ENCODE measurements at regions of chr7 and their contacts with region 1.

Region 1: GRCh38 chr7:16564909-16565426 is 38.3 kb downstream of the LRRC72 start:
- DNase-seq: peak in 4 of 5 donors; percentile 43 to 53 (median 51)
- H3K4me3 ChIP-seq: no peak overlapping the region
- H3K4me3 Mint-ChIP-seq: peak overlapping the region in 2 of 8 donors; percentile 57 to 67
- H3K27ac ChIP-seq: no peak overlapping the region
- H3K27ac Mint-ChIP-seq: peak overlapping the region in 1 of 7 donors; percentile 81
- H3K4me1 ChIP-seq: peaks cover 19% of the 10 kb centered on the region
- H3K4me1 Mint-ChIP-seq: peaks cover 8 to 17% (median 14%) of the 10 kb centered on the region in 4 donors
- H3K27me3 ChIP-seq: no peaks in the 10 kb centered on the region
- H3K27me3 Mint-ChIP-seq: peaks cover 3 to 5% of the 10 kb centered on the region in 2 donors

Region 2: DNA sequence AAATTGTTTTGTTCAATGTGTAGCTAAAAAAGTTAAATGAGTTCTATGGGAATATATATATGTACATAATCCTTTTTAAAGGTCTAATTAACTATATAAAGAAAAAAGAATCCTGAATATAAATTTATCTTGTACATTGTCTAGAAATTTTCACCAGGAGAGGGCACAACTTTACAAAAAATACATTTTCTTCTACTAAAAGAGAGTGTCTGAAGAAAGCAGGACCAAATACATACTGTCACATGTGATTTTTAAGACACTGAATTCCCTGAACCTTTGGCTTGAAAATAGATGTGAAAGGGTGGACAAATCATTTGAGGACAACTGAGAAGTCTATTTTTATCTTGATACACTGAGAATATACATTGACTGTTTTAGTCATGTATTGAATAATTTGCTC is 1866.7 kb before region 1 on chr7:
- CTCF ChIA-PET with region 1: no interaction called
- POLR2A ChIA-PET with region 1: no interaction called
- intact Hi-C with region 1: loop called (anchors 5 kb)
- DNase-seq: no peak
- H3K4me3 ChIP-seq: no peak overlapping the region
- H3K4me3 Mint-ChIP-seq: no peak overlapping the region
- H3K27ac ChIP-seq: no peak overlapping the region
- H3K27ac Mint-ChIP-seq: no peak overlapping the region
- H3K4me1 ChIP-seq: no peaks in the 10 kb centered on the region
- H3K4me1 Mint-ChIP-seq: no peaks in the 10 kb centered on the region
- H3K27me3 ChIP-seq: no peaks in the 10 kb centered on the region
- H3K27me3 Mint-ChIP-seq: peaks cover 0 to 2% of the 10 kb centered on the region in 2 donors

Region 3: GRCh38 chr7:15963206-15963605 is 601.8 kb before region 1 on chr7:
- CTCF ChIA-PET with region 1: no interaction called
- POLR2A ChIA-PET with region 1: no interaction called
- intact Hi-C with region 1: no loop called
- DNase-seq: no peak
- H3K4me3 ChIP-seq: no peak overlapping the region
- H3K4me3 Mint-ChIP-seq: no peak overlapping the region
- H3K27ac ChIP-seq: no peak overlapping the region
- H3K27ac Mint-ChIP-seq: no peak overlapping the region
- H3K4me1 ChIP-seq: no peaks in the 10 kb centered on the region
- H3K4me1 Mint-ChIP-seq: no peaks in the 10 kb centered on the region
- H3K27me3 ChIP-seq: no peaks in the 10 kb centered on the region
- H3K27me3 Mint-ChIP-seq: no peaks in the 10 kb centered on the region

Region 4: GRCh38 chr7:16028103-16028502 is 536.9 kb before region 1 on chr7:
- CTCF ChIA-PET with region 1: no interaction called
- POLR2A ChIA-PET with region 1: no interaction called
- intact Hi-C with region 1: no loop called
- DNase-seq: no peak
- H3K4me3 ChIP-seq: no peak overlapping the region
- H3K4me3 Mint-ChIP-seq: no peak overlapping the region
- H3K27ac ChIP-seq: no peak overlapping the region
- H3K27ac Mint-ChIP-seq: no peak overlapping the region
- H3K4me1 ChIP-seq: no peaks in the 10 kb centered on the region
- H3K4me1 Mint-ChIP-seq: no peaks in the 10 kb centered on the region
- H3K27me3 ChIP-seq: no peaks in the 10 kb centered on the region
- H3K27me3 Mint-ChIP-seq: no peaks in the 10 kb centered on the region

Region 5: GRCh38 chr7:16078076-16078952 is 486.7 kb before region 1 on chr7:
- CTCF ChIA-PET with region 1: interaction called, 55 read pairs
- POLR2A ChIA-PET with region 1: no interaction called
- intact Hi-C with region 1: no loop called
- DNase-seq: peak in 4 of 5 donors; percentile 18 to 38 (median 26)
- H3K4me3 ChIP-seq: no peak overlapping the region
- H3K4me3 Mint-ChIP-seq: no peak overlapping the region
- H3K27ac ChIP-seq: no peak overlapping the region
- H3K27ac Mint-ChIP-seq: no peak overlapping the region
- H3K4me1 ChIP-seq: no peaks in the 10 kb centered on the region
- H3K4me1 Mint-ChIP-seq: peaks cover 0 to 7% (median 0%) of the 10 kb centered on the region in 4 donors
- H3K27me3 ChIP-seq: no peaks in the 10 kb centered on the region
- H3K27me3 Mint-ChIP-seq: no peaks in the 10 kb centered on the region

Region 6: DNA sequence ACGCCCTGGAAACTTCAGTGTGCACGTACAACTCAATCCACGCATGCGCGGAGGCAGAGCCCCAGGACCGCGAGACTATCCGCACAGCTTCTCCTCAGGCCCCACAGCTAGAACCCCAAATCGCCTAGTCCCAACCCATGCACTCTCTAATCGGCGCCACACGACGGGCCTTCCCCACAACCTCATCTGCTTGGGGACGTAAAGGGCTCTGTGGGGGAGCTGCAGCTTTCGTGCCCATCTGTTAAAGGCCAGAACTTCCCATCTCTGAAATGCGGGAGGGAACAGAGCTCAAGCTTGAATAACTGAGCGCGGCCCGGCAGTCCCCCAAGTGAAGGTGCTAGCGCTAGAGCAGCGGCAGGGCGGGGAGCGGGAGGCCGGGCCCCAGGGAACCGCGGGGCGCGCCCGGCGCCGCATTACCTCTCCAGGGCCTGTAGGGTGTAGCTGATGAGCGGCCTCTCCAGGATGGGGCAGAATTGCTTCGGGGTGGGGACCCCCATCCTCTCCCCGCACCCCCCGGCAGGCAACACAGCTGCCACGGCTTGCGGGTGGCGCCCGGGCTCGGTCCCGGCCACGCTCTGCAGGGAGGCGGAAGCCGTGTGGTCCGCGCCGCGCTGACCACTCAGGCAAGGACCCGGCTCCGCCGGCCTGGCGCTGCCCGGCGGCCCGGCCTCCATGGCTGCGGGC is 144.2 kb before region 1 on chr7:
- CTCF ChIA-PET with region 1: interaction called, 15 read pairs
- POLR2A ChIA-PET with region 1: no interaction called
- intact Hi-C with region 1: no loop called
- DNase-seq: peak; percentile 87 to 89 (median 88)
- H3K4me3 ChIP-seq: peak overlapping the region; percentile 50 to 63
- H3K4me3 Mint-ChIP-seq: peak overlapping the region; percentile 81 to 94 (median 88)
- H3K27ac ChIP-seq: peak overlapping the region; percentile 64
- H3K27ac Mint-ChIP-seq: peak overlapping the region; percentile 82 to 97 (median 95)
- H3K4me1 ChIP-seq: peaks cover 15% of the 10 kb centered on the region
- H3K4me1 Mint-ChIP-seq: peaks cover 10 to 32% (median 21%) of the 10 kb centered on the region in 4 donors
- H3K27me3 ChIP-seq: no peaks in the 10 kb centered on the region
- H3K27me3 Mint-ChIP-seq: peaks cover 0 to 8% of the 10 kb centered on the region in 2 donors

Region 7: GRCh38 chr7:16554518-16555236 is 10.3 kb before region 1 on chr7:
- CTCF ChIA-PET with region 1: interaction called, 72 read pairs
- POLR2A ChIA-PET with region 1: no interaction called
- intact Hi-C with region 1: no loop called
- DNase-seq: no peak
- H3K4me3 ChIP-seq: no peak overlapping the region
- H3K4me3 Mint-ChIP-seq: no peak overlapping the region
- H3K27ac ChIP-seq: no peak overlapping the region
- H3K27ac Mint-ChIP-seq: no peak overlapping the region
- H3K4me1 ChIP-seq: no peaks in the 10 kb centered on the region
- H3K4me1 Mint-ChIP-seq: no peaks in the 10 kb centered on the region
- H3K27me3 ChIP-seq: no peaks in the 10 kb centered on the region
- H3K27me3 Mint-ChIP-seq: peaks cover 0 to 6% of the 10 kb centered on the region in 2 donors